Colonic mucosa (tissue), 4 donors: ENCODE measurements at regions of chr18 and their contacts with region 1.

Region 1: GRCh38 chr18:36757991-36758390 is 70.8 kb downstream of the TPGS2 start:
- DNase-seq: no peak
- H3K4me3 ChIP-seq: no peak overlapping the region
- H3K27ac ChIP-seq: no peak overlapping the region
- H3K4me1 ChIP-seq: no peaks in the 10 kb centered on the region
- H3K27me3 ChIP-seq: no peaks in the 10 kb centered on the region
- CTCF ChIP-seq: no peak

Region 2: DNA sequence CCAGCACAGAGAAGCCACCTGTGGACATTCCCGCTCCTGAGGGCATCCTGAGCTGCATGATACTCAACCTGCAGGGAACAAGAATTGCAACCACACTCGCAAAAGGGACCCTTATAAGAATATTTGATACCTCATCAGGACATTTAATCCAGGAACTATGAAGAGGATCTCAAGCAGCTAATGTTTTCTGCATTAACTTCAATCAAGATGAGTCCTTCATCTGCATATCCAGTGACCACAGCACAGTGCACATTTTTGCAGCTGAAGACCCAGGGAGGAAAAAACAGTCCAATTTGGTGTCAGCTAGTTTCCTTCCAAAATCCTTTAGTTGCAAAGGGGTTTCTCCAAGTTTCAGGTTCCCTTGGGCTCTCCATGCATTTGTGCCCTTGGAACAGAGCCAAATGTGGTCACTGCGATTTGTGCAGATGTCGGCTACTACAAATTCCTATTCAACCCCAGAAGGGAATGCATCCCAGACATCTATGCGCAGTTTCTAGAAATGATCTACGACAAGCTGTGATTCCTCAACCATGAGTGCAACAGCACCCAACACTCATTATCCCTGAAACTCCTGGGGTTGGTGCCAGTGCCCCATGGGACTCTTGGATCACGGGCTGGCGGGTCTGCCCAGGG is 483.8 kb before region 1 on chr18:
- intact Hi-C with region 1: no loop called
- DNase-seq: no peak
- H3K4me3 ChIP-seq: no peak overlapping the region
- H3K27ac ChIP-seq: no peak overlapping the region
- H3K4me1 ChIP-seq: no peaks in the 10 kb centered on the region
- H3K27me3 ChIP-seq: no peaks in the 10 kb centered on the region
- CTCF ChIP-seq: no peak

Region 3: GRCh38 chr18:36688020-36688965 is 69.7 kb before region 1 on chr18:
- intact Hi-C with region 1: loop called (anchors 2 kb)
- DNase-seq: peak; percentile 75
- H3K4me3 ChIP-seq: no peak overlapping the region
- H3K27ac ChIP-seq: no peak overlapping the region
- H3K4me1 ChIP-seq: no peaks in the 10 kb centered on the region
- H3K27me3 ChIP-seq: no peaks in the 10 kb centered on the region
- CTCF ChIP-seq: peak; percentile 75

Region 4: GRCh38 chr18:36887114-36887513 is 129.1 kb after region 1 on chr18:
- intact Hi-C with region 1: no loop called
- DNase-seq: no peak
- H3K4me3 ChIP-seq: no peak overlapping the region
- H3K27ac ChIP-seq: no peak overlapping the region
- H3K4me1 ChIP-seq: no peaks in the 10 kb centered on the region
- H3K27me3 ChIP-seq: no peaks in the 10 kb centered on the region
- CTCF ChIP-seq: no peak